ENCODE measurements at regions of chr10 and their contacts with region 1.

Region 1: DNA sequence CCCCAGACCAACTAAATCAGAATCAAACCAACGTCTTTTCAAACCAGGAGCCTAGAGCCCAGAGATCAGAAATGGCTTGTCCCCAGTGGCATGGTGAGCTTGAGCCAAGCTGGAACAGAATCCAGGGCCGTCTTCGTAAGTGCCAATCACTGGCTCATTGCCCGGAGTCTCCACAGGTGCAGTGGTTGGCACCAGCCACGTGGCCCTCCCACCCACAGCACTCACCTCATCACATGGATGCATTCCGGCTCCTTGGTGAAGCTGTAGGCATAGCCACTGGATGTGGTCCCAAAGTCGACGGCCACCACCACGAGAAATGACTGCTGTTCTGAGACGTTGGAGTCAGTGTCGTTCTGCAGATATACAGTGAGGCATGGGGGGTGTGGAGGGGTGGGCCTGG is 37.4 kb downstream of the HSPA12A start:
- DNase-seq: no peak
- H3K4me3 ChIP-seq: no peak overlapping the region
- H3K27ac ChIP-seq: no peak overlapping the region
- H3K4me1 ChIP-seq: peaks cover 4 to 14% (median 10%) of the 10 kb centered on the region in 4 experiments
- H3K27me3 ChIP-seq: no peaks in the 10 kb centered on the region
- CTCF ChIP-seq: no peak
- EP300 ChIP-seq: no peak
- POLR2A ChIP-seq: no peak
- RAD21 ChIP-seq: no peak

Region 2: GRCh38 chr10:116690356-116691322 is 14.3 kb before region 1 on chr10:
- CTCF ChIA-PET with region 1: interaction called, 45 read pairs
- POLR2A ChIA-PET with region 1: interaction called, 4 read pairs
- DNase-seq: peak in 1 of 2 experiments; percentile 57
- H3K4me3 ChIP-seq: peak overlapping the region in 3 of 4 experiments; percentile 19 to 33 (median 21); a peak in 2 of 8 replicates
- H3K27ac ChIP-seq: no peak overlapping the region
- H3K4me1 ChIP-seq: peaks cover 4 to 17% (median 8%) of the 10 kb centered on the region in 4 experiments; a peak in 6 of 7 replicates
- H3K27me3 ChIP-seq: no peaks in the 10 kb centered on the region; a peak in 3 of 7 replicates
- CTCF ChIP-seq: peak; percentile 45 to 62 (median 46)
- EP300 ChIP-seq: no peak
- POLR2A ChIP-seq: no peak
- RAD21 ChIP-seq: peak; percentile 49 to 60

Region 3: DNA sequence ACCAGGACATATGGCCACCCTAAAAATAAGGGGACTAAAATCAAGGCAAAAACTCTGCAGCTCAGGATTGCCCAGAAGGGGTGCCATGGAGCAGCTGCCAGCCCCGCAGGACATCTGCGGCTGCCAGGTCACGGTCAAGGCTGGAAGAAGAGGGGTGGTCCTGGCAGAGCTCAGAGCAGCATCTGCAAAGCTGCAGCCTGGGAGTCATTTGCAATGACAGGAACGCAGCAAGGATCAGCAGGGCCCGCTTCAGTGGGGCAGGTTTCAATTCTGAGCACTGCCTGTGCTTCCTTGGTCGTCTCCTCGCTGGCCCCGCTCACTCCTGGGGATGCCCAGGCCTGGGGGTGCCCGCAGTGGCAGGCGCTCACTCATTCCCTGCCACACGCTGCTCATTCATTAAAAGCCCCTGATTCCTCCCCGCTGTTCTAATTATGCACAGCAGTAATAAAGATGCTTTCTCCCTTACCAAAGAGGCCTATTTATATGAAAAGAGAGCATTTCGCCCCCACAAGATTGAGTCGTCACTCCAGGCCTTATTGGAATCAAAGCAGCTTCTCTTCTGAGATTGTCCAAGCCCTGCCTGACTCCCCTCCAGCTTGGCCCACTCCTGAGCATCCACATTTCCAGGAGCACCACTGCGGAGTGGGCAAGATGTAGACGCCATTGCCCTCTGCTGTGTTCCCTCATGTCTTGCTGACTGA is 32.9 kb after region 1 on chr10:
- CTCF ChIA-PET with region 1: interaction called, 14 read pairs
- POLR2A ChIA-PET with region 1: no interaction called
- DNase-seq: peak in 1 of 2 experiments; percentile 55
- H3K4me3 ChIP-seq: no peak overlapping the region
- H3K27ac ChIP-seq: no peak overlapping the region
- H3K4me1 ChIP-seq: peaks cover 0 to 5% (median 3%) of the 10 kb centered on the region in 4 experiments; a peak in 5 of 7 replicates
- H3K27me3 ChIP-seq: peaks cover 14 to 33% (median 27%) of the 10 kb centered on the region in 4 experiments
- CTCF ChIP-seq: peak; percentile 71 to 78 (median 74)
- EP300 ChIP-seq: no peak
- POLR2A ChIP-seq: no peak
- RAD21 ChIP-seq: peak; percentile 39 to 59; a peak in 3 of 4 replicates